Activated T-helper 1 cell treated with anti-CD3 and anti-CD28 coated beads, Interleukin-12 subunit alpha, Interleukin-12 subunit beta, Interleukin-2, Interleukin-4 antibody, amounts not matched to agents 30 ng/mL and 10 ng/mL and 1 ng/mL, durations not matched to agents 14 hours and 24 hours and 36 hours (primary cell): ENCODE measurements at regions of chr3 and their contacts with region 1.

Region 1: DNA sequence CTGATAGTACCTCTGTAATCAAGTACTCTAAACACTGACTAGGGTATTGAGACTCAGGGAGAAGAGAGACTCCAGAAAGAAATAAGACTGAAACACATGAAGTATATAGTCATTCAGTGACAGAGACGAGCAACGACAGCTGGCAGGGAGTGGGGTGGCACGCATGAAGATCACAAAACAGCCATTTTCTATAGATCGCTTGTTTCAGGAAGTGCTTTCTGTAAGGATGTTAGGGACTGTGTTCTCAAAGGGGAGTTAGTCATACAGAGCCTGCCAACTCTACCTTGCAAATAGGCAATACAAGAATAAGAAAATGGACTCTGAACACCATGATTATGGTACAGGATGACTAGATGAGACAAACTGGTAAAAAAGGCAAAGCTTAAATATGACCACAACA is 139.5 kb downstream of the TBL1XR1 start:
- DNase-seq: peak; percentile 10
- H3K4me3 Mint-ChIP-seq: no peak overlapping the region
- H3K27ac Mint-ChIP-seq: no peak overlapping the region
- H3K4me1 Mint-ChIP-seq: peaks cover 7% of the 10 kb centered on the region
- H3K27me3 Mint-ChIP-seq: no peaks in the 10 kb centered on the region

Region 2: GRCh38 chr3:177144923-177145780 is 87.4 kb after region 1 on chr3:
- intact Hi-C with region 1: loop called (anchors 2 kb)
- DNase-seq: peak; percentile 35
- H3K4me3 Mint-ChIP-seq: peak overlapping the region; percentile 61
- H3K27ac Mint-ChIP-seq: peak overlapping the region; percentile 93
- H3K4me1 Mint-ChIP-seq: peaks cover 69% of the 10 kb centered on the region
- H3K27me3 Mint-ChIP-seq: no peaks in the 10 kb centered on the region

Region 3: GRCh38 chr3:177337541-177338331 is 280.0 kb after region 1 on chr3:
- intact Hi-C with region 1: loop called (anchors 1 kb)
- DNase-seq: peak; percentile 66
- H3K4me3 Mint-ChIP-seq: peak overlapping the region; percentile 51
- H3K27ac Mint-ChIP-seq: peak overlapping the region; percentile 95
- H3K4me1 Mint-ChIP-seq: peaks cover 65% of the 10 kb centered on the region
- H3K27me3 Mint-ChIP-seq: peaks cover 8% of the 10 kb centered on the region

Region 4: GRCh38 chr3:177491296-177492032 is 433.7 kb after region 1 on chr3:
- intact Hi-C with region 1: no loop called
- DNase-seq: no peak
- H3K4me3 Mint-ChIP-seq: no peak overlapping the region
- H3K27ac Mint-ChIP-seq: no peak overlapping the region
- H3K4me1 Mint-ChIP-seq: peaks cover 7% of the 10 kb centered on the region
- H3K27me3 Mint-ChIP-seq: no peaks in the 10 kb centered on the region

Region 5: DNA sequence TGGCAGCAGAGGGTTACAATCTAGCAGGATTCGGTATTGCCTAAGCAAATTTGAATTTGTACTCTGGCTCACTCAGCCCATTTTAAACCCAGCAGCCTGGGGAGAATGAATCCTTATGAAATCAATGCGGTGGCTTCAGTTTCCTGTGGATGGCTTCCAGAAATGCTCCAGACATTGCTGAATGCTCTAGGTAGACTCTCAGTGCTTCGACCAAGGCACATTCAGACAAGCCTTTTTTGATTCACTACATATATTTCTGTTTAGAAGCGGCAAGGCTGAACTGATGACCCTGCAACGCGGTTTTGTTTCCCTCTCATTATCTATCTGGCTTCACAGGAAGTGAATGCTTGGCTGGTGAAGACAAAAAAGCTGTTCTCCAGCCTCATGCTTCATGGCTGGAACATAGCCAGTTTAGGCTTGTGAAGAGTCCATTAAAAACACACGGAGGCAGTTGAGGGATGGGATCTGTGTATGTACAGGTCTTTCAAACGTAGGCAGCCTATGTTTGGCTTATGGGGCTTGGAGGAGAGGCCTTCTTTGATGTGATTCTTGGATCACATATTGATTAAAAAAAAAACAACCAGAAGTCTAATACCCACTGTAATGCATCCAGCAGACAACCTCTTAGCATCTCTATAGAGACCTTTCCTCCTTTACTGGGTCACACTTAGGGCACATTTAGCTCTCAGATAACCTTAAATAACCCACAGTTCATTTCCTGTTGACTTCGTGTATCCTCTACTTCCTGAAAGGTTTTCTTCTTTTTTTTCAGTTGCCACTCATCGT is 539.7 kb after region 1 on chr3:
- intact Hi-C with region 1: loop called (anchors 2 kb)
- DNase-seq: no peak
- H3K4me3 Mint-ChIP-seq: peak overlapping the region; percentile 71
- H3K27ac Mint-ChIP-seq: peak overlapping the region; percentile 96
- H3K4me1 Mint-ChIP-seq: peaks cover 61% of the 10 kb centered on the region
- H3K27me3 Mint-ChIP-seq: peaks cover 2% of the 10 kb centered on the region

Region 6: GRCh38 chr3:177679568-177680441 is 622.0 kb after region 1 on chr3:
- intact Hi-C with region 1: no loop called
- DNase-seq: no peak
- H3K4me3 Mint-ChIP-seq: no peak overlapping the region
- H3K27ac Mint-ChIP-seq: no peak overlapping the region
- H3K4me1 Mint-ChIP-seq: peaks cover 22% of the 10 kb centered on the region
- H3K27me3 Mint-ChIP-seq: no peaks in the 10 kb centered on the region

Region 7: GRCh38 chr3:177994976-177995375 is 937.2 kb after region 1 on chr3:
- intact Hi-C with region 1: loop called (anchors 5 kb)
- DNase-seq: no peak
- H3K4me3 Mint-ChIP-seq: no peak overlapping the region
- H3K27ac Mint-ChIP-seq: peak overlapping the region; percentile 75
- H3K4me1 Mint-ChIP-seq: peaks cover 21% of the 10 kb centered on the region
- H3K27me3 Mint-ChIP-seq: no peaks in the 10 kb centered on the region